Caco-2 (cell line): ENCODE measurements at regions of chr6 and their contacts with region 1.

Region 1: DNA sequence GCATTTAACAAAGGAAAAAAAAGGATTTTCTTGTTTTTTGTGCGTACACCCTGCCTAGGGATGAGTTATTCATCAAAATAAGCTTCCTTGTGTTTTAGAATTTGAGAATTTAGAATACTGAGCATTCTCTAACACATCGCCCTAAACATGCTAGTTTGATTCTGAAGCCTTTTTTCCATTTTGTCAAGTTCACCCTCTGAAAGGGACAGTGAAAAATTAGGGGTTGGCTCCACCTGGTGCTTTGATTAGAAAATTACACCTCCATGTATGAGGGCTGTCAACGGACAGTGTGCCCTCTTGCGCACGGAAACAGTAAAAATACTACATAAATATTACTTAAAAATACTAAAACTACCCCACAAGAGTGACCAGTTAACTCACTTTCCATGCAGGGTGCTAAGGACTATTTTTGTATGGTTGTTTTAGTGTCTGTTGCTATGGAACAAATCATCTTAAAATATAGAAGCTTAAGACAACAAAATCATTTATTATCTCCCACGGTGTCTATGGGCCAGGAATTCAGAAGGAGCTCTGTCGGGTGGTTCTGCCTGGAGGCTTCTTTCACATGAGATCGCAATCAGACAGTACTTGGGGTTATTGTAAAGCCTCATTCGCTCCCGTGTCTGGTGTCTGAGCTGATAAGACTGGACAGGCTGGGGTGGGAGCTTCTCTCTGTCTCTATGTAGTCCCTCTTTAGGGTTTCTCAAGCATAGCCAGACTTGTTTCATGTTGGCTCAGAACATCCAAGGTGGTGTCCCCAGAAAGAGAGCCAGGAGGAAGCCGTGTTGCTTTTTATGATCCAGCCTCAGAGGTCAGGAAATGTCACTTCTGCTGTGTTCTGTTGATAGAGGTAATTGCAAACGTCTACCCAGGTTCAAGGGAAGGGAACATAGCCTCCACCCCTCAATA is 41.1 kb upstream of the TMEM170B start:
- DNase-seq: peak; percentile 69 to 84
- H3K4me3 ChIP-seq: no peak overlapping the region
- H3K4me3 Mint-ChIP-seq: no peak overlapping the region
- H3K27ac Mint-ChIP-seq: no peak overlapping the region
- H3K4me1 ChIP-seq: peaks cover 18% of the 10 kb centered on the region; the same call in 1 of the 2 replicates
- H3K4me1 Mint-ChIP-seq: peaks cover 7% of the 10 kb centered on the region
- H3K27me3 ChIP-seq: no peaks in the 10 kb centered on the region
- H3K27me3 Mint-ChIP-seq: no peaks in the 10 kb centered on the region
- CTCF ChIP-seq: peak; percentile 87 to 96

Region 2: DNA sequence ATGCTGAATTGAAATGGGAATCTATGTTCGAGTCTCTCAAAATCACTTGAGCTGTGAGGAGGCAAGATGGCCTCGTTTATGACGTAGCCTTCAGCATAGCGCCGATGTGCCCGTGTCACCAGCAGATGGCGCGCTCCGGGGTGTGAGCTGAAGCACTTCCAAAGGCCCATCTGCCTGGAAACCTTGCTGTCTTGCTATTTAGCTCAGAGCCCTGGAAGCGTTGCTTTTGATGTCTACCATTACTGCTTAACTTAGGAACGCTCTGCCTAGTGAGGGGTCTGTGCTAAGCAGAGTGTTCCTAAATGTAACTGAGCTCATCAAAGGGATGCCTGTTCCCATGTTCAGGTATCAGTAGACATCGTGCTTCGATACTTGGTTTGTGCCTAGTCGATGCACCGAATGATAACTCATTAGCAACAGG is 541.8 kb before region 1 on chr6:
- CTCF ChIA-PET with region 1: interaction called, 5 read pairs
- POLR2A ChIA-PET with region 1: no interaction called
- intact Hi-C with region 1: loop called (anchors 1 kb)
- DNase-seq: peak; percentile 78 to 85
- H3K4me3 ChIP-seq: no peak overlapping the region
- H3K4me3 Mint-ChIP-seq: no peak overlapping the region
- H3K27ac Mint-ChIP-seq: no peak overlapping the region
- H3K4me1 ChIP-seq: peaks cover 7% of the 10 kb centered on the region
- H3K4me1 Mint-ChIP-seq: peaks cover 5% of the 10 kb centered on the region
- H3K27me3 ChIP-seq: no peaks in the 10 kb centered on the region
- H3K27me3 Mint-ChIP-seq: no peaks in the 10 kb centered on the region
- CTCF ChIP-seq: peak; percentile 66 to 72

Region 3: GRCh38 chr6:11144393-11144851 is 352.0 kb before region 1 on chr6:
- CTCF ChIA-PET with region 1: interaction called, 10 read pairs
- POLR2A ChIA-PET with region 1: no interaction called
- intact Hi-C with region 1: loop called (anchors 1 kb)
- DNase-seq: peak; percentile 76 to 83
- H3K4me3 ChIP-seq: no peak overlapping the region
- H3K4me3 Mint-ChIP-seq: no peak overlapping the region
- H3K27ac Mint-ChIP-seq: peak overlapping the region; percentile 31
- H3K4me1 ChIP-seq: peaks cover 10% of the 10 kb centered on the region; the same call in 1 of the 2 replicates
- H3K4me1 Mint-ChIP-seq: peaks cover 19% of the 10 kb centered on the region
- H3K27me3 ChIP-seq: no peaks in the 10 kb centered on the region
- H3K27me3 Mint-ChIP-seq: no peaks in the 10 kb centered on the region
- CTCF ChIP-seq: peak; percentile 93 to 94

Region 4: GRCh38 chr6:11226005-11226404 is 270.4 kb before region 1 on chr6:
- CTCF ChIA-PET with region 1: no interaction called
- POLR2A ChIA-PET with region 1: no interaction called
- intact Hi-C with region 1: loop called (anchors 1 kb)
- DNase-seq: no peak
- H3K4me3 ChIP-seq: no peak overlapping the region
- H3K4me3 Mint-ChIP-seq: peak overlapping the region; percentile 27
- H3K27ac Mint-ChIP-seq: peak overlapping the region; percentile 66
- H3K4me1 ChIP-seq: peaks cover 41% of the 10 kb centered on the region
- H3K4me1 Mint-ChIP-seq: peaks cover 30% of the 10 kb centered on the region
- H3K27me3 ChIP-seq: no peaks in the 10 kb centered on the region
- H3K27me3 Mint-ChIP-seq: no peaks in the 10 kb centered on the region
- CTCF ChIP-seq: no peak

Region 5: DNA sequence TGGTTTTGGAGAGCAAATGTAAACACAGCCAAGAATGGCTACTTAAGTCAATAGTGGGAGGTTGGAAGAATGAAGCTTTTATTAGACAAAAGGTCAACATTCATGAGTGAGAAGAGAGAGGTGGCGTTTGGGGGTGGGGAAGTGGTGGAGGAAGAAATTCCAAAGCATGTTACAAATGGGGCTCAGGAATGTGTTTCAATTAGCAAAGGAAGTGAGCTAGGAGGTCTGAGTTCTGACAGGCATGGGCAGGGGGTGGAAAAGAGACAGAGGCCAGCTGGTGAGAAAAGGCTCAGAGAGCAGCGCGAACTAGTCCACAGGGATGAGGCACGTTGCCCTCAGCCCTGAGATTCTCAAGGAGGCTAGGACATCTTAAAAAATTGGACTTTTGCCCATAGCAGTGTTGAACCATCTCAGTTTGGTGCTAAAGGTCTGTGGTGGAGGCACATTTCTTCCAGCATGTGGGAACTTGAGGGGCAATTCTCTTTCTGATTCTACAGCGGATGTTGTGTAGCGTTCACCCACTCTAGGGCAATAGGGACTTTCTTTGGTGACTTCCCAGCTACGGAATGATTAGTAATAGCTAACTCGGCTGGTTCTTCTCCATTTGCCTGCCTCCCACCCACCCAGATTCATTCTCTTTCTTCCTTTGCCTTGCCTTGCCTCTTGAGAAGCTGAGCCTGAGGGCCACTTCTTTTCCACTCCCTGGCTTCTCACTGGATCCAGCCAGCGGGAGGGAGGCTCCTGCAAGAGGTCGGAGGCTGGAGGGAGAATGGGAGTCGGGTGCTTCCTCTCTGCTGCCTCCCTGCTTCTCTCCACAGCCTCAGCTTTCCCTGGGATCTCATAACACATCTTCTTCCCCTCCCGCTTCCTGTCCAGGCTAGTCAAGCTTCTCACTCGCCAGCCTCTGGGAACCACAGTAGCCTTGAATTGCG is 218.9 kb before region 1 on chr6:
- CTCF ChIA-PET with region 1: interaction called, 3 read pairs
- POLR2A ChIA-PET with region 1: no interaction called
- intact Hi-C with region 1: loop called (anchors 5 kb)
- DNase-seq: peak; percentile 77 to 84
- H3K4me3 ChIP-seq: no peak overlapping the region
- H3K4me3 Mint-ChIP-seq: peak overlapping the region; percentile 15
- H3K27ac Mint-ChIP-seq: peak overlapping the region; percentile 95
- H3K4me1 ChIP-seq: peaks cover 38% of the 10 kb centered on the region
- H3K4me1 Mint-ChIP-seq: peaks cover 39% of the 10 kb centered on the region
- H3K27me3 ChIP-seq: no peaks in the 10 kb centered on the region
- H3K27me3 Mint-ChIP-seq: no peaks in the 10 kb centered on the region
- CTCF ChIP-seq: no peak

Region 6: DNA sequence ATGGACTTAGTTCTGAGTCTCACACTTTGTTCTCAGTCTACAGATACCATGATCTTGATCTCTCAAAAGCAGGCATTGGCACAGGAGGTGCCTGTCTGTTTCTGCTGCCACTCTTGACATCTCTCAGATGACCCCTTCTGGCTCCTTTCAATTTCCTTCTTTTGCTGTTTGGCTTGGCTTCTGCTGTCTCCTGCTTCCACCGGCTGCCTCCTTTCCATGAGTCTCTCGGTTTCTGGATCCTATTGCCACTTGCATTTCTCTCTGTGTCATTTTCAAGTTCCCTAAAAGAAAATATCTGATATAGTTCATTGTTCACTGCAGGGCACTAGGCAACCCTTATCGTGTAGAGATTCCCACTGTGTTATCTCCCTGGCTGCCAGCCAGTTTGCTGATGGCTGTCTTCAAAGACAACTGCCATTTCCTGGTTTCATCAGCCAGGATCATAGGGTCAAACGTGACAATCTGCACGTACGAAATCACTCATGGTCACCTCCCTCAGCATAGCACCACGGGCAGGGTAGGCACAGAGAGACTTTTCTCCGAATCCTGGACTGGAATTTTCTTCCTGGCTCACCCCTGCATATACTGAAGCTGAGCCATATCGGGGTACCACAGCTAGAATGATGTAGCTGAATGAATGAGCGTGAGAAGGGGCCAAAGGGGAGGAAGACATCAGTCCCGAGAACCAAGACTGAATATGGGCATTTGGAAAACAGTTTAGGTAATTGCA is 103.5 kb before region 1 on chr6:
- CTCF ChIA-PET with region 1: no interaction called
- POLR2A ChIA-PET with region 1: no interaction called
- intact Hi-C with region 1: loop called (anchors 5 kb)
- DNase-seq: peak; percentile 57 to 67
- H3K4me3 ChIP-seq: no peak overlapping the region
- H3K4me3 Mint-ChIP-seq: no peak overlapping the region
- H3K27ac Mint-ChIP-seq: peak overlapping the region; percentile 89
- H3K4me1 ChIP-seq: peaks cover 58% of the 10 kb centered on the region
- H3K4me1 Mint-ChIP-seq: peaks cover 37% of the 10 kb centered on the region
- H3K27me3 ChIP-seq: no peaks in the 10 kb centered on the region
- H3K27me3 Mint-ChIP-seq: no peaks in the 10 kb centered on the region
- CTCF ChIP-seq: no peak

Region 7: DNA sequence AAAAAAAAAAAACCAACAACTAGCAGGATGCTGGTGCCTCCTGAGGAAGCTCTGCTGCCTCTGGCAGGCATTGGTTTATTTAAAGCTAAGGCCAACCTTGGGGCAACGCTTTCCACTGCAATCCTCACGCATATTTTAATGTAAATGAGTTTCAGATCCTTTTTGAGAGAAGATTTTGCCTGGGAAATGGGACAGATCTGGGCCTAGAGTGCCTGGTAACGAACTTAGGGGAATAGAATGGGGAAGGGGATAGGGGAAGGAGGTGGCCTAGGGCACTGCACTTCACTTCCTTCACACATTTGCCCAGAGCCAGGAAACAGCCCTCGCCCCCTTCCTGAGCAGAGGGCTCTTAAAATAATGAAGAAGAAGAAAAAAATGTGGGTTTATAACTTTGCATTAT is 91.6 kb before region 1 on chr6:
- CTCF ChIA-PET with region 1: no interaction called
- POLR2A ChIA-PET with region 1: no interaction called
- intact Hi-C with region 1: no loop called
- DNase-seq: no peak
- H3K4me3 ChIP-seq: no peak overlapping the region
- H3K4me3 Mint-ChIP-seq: no peak overlapping the region
- H3K27ac Mint-ChIP-seq: no peak overlapping the region
- H3K4me1 ChIP-seq: peaks cover 1% of the 10 kb centered on the region
- H3K4me1 Mint-ChIP-seq: peaks cover 6% of the 10 kb centered on the region
- H3K27me3 ChIP-seq: no peaks in the 10 kb centered on the region
- H3K27me3 Mint-ChIP-seq: no peaks in the 10 kb centered on the region
- CTCF ChIP-seq: no peak

Region 8: GRCh38 chr6:11575408-11576033 is 79.1 kb after region 1 on chr6:
- CTCF ChIA-PET with region 1: interaction called, 7 read pairs
- POLR2A ChIA-PET with region 1: no interaction called
- intact Hi-C with region 1: loop called (anchors 1 kb)
- DNase-seq: peak; percentile 73 to 76
- H3K4me3 ChIP-seq: peak overlapping the region; percentile 30
- H3K4me3 Mint-ChIP-seq: peak overlapping the region; percentile 64
- H3K27ac Mint-ChIP-seq: peak overlapping the region; percentile 24
- H3K4me1 ChIP-seq: no peaks in the 10 kb centered on the region
- H3K4me1 Mint-ChIP-seq: peaks cover 7% of the 10 kb centered on the region
- H3K27me3 ChIP-seq: no peaks in the 10 kb centered on the region
- H3K27me3 Mint-ChIP-seq: no peaks in the 10 kb centered on the region
- CTCF ChIP-seq: peak; percentile 85 to 91